CD4-positive, alpha-beta T cell (primary cell): ENCODE measurements at regions of chr1 and their contacts with region 1.

Region 1: DNA sequence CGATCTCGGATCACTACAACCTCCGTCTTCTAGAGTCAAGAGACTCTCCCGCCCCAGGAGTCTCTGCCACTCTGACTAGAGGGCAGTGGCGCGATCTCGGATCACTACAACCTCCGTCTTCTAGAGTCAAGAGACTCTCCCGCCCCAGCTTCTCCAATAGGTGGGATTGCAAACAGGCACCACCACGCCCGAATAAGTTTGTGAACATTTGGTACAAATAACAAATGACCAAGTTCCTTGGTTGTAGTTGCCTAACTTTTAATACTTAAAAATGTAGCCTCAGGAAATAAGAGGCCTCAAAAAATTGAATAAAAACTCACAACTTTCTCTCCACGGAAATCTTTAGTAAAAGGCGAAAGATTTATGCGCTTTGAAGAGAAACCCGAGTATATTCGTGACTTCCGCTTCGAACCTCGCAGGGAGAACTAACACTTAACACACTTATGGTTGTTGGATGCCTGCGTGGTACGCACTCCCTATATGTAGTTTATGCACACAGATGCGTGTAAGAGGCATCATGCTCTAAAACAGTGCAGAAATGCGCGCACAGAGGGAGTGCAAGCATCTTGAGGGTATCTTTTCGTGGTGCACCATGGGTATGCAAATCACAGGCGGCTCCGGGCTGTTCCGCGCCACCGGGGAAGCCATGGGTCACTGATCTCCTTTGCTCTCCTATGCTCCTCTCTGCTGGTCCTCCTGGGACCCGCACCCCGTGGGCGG is 11.4 kb downstream of the BTBD19 start:
- DNase-seq: peak; percentile 71 to 90 (median 79)
- ATAC-seq: peak; percentile 78
- H3K4me3 ChIP-seq: peak overlapping the region; percentile 65
- H3K4me3 Mint-ChIP-seq: peak overlapping the region; percentile 94
- H3K27ac ChIP-seq: peak overlapping the region; percentile 96 to 99
- H3K27ac Mint-ChIP-seq: peak overlapping the region; percentile 100
- H3K4me1 ChIP-seq: peaks cover 31% of the 10 kb centered on the region
- H3K4me1 Mint-ChIP-seq: peaks cover 45% of the 10 kb centered on the region
- H3K27me3 ChIP-seq: no peaks in the 10 kb centered on the region
- H3K27me3 Mint-ChIP-seq: no peaks in the 10 kb centered on the region
- CTCF ChIP-seq: no peak

Region 2: DNA sequence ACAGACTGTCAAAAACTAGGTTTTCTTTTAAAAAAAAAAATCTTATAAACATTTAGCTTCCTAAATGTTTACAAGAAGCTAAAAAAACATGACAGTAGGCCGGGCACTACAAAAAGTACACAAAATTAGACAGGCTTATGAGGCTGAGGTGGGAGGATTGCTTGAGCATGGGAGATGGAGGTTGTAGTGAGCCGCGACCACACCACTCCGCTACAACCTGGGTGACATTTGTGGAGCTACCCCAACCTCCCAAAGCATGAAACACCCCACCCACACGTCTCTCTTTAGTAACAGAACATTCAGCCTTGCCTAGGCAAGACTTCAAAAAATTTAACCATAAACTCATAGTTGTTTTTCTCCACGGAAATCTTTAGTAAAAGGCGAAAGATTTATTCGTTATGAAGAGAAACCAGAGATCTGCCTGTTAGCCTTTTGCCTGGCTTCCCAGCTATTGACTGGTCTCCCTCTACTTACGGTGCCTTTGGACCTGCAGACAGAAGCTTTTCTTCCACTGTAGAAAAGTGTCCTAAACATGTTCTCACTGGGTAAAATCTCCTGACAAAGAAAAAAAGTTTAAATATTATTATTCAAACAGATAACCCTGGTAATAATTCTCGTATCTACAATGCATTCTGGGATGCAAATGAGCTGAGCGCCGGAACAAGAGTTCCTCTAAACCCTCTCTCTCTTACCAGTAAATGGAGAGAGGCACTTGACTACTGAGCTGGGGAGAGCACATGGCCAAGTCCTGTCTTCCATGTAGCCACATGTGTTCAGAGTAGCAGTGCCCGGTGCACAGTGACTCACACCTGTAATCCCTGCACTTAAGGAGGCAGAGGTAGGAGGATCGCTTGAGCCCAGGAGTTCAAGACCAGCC is 98.0 kb before region 1 on chr1:
- CTCF ChIA-PET with region 1: no interaction called
- POLR2A ChIA-PET with region 1: interaction called, 60 read pairs
- intact Hi-C with region 1: loop called in 1 of 2 experiments (anchors 5 kb)
- DNase-seq: peak; percentile 16 to 93 (median 48)
- ATAC-seq: peak; percentile 75
- H3K4me3 ChIP-seq: peak overlapping the region; percentile 6
- H3K4me3 Mint-ChIP-seq: peak overlapping the region; percentile 84
- H3K27ac ChIP-seq: peak overlapping the region; percentile 30 to 76
- H3K27ac Mint-ChIP-seq: peak overlapping the region; percentile 90
- H3K4me1 ChIP-seq: peaks cover 77% of the 10 kb centered on the region
- H3K4me1 Mint-ChIP-seq: peaks cover 68% of the 10 kb centered on the region
- H3K27me3 ChIP-seq: no peaks in the 10 kb centered on the region
- H3K27me3 Mint-ChIP-seq: no peaks in the 10 kb centered on the region
- CTCF ChIP-seq: no peak

Region 3: DNA sequence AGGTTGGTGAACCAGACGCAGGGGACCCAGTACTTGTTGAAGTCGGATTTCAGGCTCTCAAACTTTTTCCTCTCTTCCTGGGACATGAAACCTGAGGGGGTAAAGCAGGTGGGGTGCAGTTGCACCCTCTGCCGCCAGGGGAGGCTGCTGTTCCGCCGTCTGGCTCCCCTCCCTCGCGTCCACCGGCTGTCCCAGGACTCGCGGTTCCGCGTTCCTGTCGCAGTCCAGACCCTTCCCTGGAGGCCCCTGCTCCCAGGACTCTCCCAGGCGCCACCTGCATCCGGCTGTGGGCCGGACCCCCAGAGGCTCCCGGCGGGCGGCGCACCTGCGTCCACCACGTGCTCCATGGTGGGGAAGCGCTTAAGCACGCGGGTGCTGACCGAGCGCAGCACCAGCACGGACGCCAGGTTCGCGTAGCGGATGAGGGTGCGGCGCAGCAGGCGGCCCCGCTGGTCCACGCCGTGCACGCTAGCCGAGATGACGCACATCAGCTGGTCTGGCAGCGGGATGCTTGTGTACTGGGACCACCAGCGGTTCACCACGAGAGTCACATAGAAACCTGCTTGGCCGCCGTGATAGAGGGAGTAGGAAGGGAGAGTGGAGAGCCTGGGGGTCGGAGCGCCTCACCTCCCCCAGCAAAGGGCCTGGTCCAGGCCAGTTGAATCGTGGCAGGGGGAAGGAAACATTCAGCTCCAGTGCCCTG is 33.5 kb before region 1 on chr1:
- CTCF ChIA-PET with region 1: interaction called, 4 read pairs
- POLR2A ChIA-PET with region 1: interaction called, 44 read pairs
- intact Hi-C with region 1: loop called (anchors 5 kb)
- DNase-seq: peak; percentile 64 to 89 (median 74)
- ATAC-seq: peak; percentile 84
- H3K4me3 ChIP-seq: peak overlapping the region; percentile 58
- H3K4me3 Mint-ChIP-seq: peak overlapping the region; percentile 86
- H3K27ac ChIP-seq: peak overlapping the region; percentile 4 to 37
- H3K27ac Mint-ChIP-seq: peak overlapping the region; percentile 53
- H3K4me1 ChIP-seq: peaks cover 35% of the 10 kb centered on the region
- H3K4me1 Mint-ChIP-seq: peaks cover 31% of the 10 kb centered on the region
- H3K27me3 ChIP-seq: no peaks in the 10 kb centered on the region
- H3K27me3 Mint-ChIP-seq: no peaks in the 10 kb centered on the region
- CTCF ChIP-seq: peak; percentile 99

Region 4: GRCh38 chr1:44799770-44800584 is 19.8 kb before region 1 on chr1 and contains the start of gene PLK3:
- CTCF ChIA-PET with region 1: interaction called, 49 read pairs
- POLR2A ChIA-PET with region 1: interaction called, 599 read pairs
- intact Hi-C with region 1: loop called (anchors 1 to 2 kb)
- DNase-seq: peak; percentile 97 to 100 (median 98)
- ATAC-seq: peak; percentile 77
- H3K4me3 ChIP-seq: peak within 1 kb of the TSS; percentile 99
- H3K4me3 Mint-ChIP-seq: peak within 1 kb of the TSS; percentile 99
- H3K27ac ChIP-seq: peak within 1 kb of the TSS; percentile 88 to 98
- H3K27ac Mint-ChIP-seq: peak within 1 kb of the TSS; percentile 86
- H3K4me1 ChIP-seq: peaks cover 48% of the 10 kb centered on the region
- H3K4me1 Mint-ChIP-seq: peaks cover 39% of the 10 kb centered on the region
- H3K27me3 ChIP-seq: no peaks in the 10 kb centered on the region
- H3K27me3 Mint-ChIP-seq: no peaks in the 10 kb centered on the region
- CTCF ChIP-seq: peak; percentile 79
- total RNA-seq, gene PLK3: 794 TPM

Region 5: GRCh38 chr1:44835738-44836675 is 16.2 kb after region 1 on chr1:
- CTCF ChIA-PET with region 1: no interaction called
- POLR2A ChIA-PET with region 1: interaction called, 4 read pairs
- intact Hi-C with region 1: loop called in 1 of 2 experiments (anchors 1 kb)
- DNase-seq: peak; percentile 77 to 93 (median 84)
- ATAC-seq: peak; percentile 98
- H3K4me3 ChIP-seq: no peak overlapping the region
- H3K4me3 Mint-ChIP-seq: no peak overlapping the region
- H3K27ac ChIP-seq: no peak overlapping the region
- H3K27ac Mint-ChIP-seq: no peak overlapping the region
- H3K4me1 ChIP-seq: peaks cover 9% of the 10 kb centered on the region
- H3K4me1 Mint-ChIP-seq: peaks cover 8% of the 10 kb centered on the region
- H3K27me3 ChIP-seq: no peaks in the 10 kb centered on the region
- H3K27me3 Mint-ChIP-seq: peaks cover 11% of the 10 kb centered on the region
- CTCF ChIP-seq: peak; percentile 91